Caco-2 (cell line): ENCODE measurements at regions of chr5 and their contacts with region 1.

Region 1: DNA sequence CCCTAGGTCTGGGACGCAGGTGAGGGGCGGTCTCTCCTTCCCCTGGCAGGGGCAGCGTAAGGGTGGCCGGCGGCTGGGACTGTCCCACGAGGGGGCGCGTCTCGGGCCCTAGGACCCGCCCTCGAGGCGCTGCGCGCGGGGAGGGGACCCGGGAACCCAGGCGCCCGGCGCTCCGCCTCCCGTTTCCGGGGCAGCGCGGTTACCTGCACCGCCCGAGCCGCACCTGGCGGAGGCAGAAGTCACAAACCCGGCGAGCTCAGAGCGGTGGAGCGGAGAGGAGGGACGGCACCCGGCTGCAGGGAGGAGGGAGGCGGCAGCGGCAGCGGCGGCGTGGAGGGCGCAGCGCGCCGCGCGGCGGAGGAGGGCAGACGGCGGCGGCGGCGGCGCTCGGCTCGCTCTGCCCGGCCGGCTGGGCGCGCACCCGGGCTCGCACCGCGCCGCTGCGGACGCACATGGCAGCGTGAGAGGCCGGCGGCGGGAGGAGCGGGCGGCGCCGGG is at the start of gene WWC1:
- DNase-seq: peak; percentile 96 to 98
- H3K4me3 ChIP-seq: peak within 1 kb of the TSS; percentile 77
- H3K4me3 Mint-ChIP-seq: peak within 1 kb of the TSS; percentile 96
- H3K27ac Mint-ChIP-seq: peak within 1 kb of the TSS; percentile 95
- H3K4me1 ChIP-seq: peaks cover 72% of the 10 kb centered on the region
- H3K4me1 Mint-ChIP-seq: peaks cover 58% of the 10 kb centered on the region
- H3K27me3 ChIP-seq: no peaks in the 10 kb centered on the region
- H3K27me3 Mint-ChIP-seq: no peaks in the 10 kb centered on the region
- CTCF ChIP-seq: peak; percentile 62 to 69
- total RNA-seq, gene WWC1: 108 and 109 TPM in 2 replicates

Region 2: GRCh38 chr5:167950126-167950721 is 341.3 kb before region 1 on chr5:
- CTCF ChIA-PET with region 1: no interaction called
- POLR2A ChIA-PET with region 1: no interaction called
- intact Hi-C with region 1: no loop called
- DNase-seq: no peak
- H3K4me3 ChIP-seq: no peak overlapping the region
- H3K4me3 Mint-ChIP-seq: no peak overlapping the region
- H3K27ac Mint-ChIP-seq: no peak overlapping the region
- H3K4me1 ChIP-seq: peaks cover 9% of the 10 kb centered on the region
- H3K4me1 Mint-ChIP-seq: no peaks in the 10 kb centered on the region
- H3K27me3 ChIP-seq: no peaks in the 10 kb centered on the region
- H3K27me3 Mint-ChIP-seq: peaks cover 14% of the 10 kb centered on the region
- CTCF ChIP-seq: no peak

Region 3: GRCh38 chr5:168234133-168234532 is 57.4 kb before region 1 on chr5:
- CTCF ChIA-PET with region 1: no interaction called
- POLR2A ChIA-PET with region 1: no interaction called
- intact Hi-C with region 1: no loop called
- DNase-seq: no peak
- H3K4me3 ChIP-seq: no peak overlapping the region
- H3K4me3 Mint-ChIP-seq: no peak overlapping the region
- H3K27ac Mint-ChIP-seq: no peak overlapping the region
- H3K4me1 ChIP-seq: no peaks in the 10 kb centered on the region
- H3K4me1 Mint-ChIP-seq: peaks cover 6% of the 10 kb centered on the region
- H3K27me3 ChIP-seq: no peaks in the 10 kb centered on the region
- H3K27me3 Mint-ChIP-seq: no peaks in the 10 kb centered on the region
- CTCF ChIP-seq: no peak

Region 4: DNA sequence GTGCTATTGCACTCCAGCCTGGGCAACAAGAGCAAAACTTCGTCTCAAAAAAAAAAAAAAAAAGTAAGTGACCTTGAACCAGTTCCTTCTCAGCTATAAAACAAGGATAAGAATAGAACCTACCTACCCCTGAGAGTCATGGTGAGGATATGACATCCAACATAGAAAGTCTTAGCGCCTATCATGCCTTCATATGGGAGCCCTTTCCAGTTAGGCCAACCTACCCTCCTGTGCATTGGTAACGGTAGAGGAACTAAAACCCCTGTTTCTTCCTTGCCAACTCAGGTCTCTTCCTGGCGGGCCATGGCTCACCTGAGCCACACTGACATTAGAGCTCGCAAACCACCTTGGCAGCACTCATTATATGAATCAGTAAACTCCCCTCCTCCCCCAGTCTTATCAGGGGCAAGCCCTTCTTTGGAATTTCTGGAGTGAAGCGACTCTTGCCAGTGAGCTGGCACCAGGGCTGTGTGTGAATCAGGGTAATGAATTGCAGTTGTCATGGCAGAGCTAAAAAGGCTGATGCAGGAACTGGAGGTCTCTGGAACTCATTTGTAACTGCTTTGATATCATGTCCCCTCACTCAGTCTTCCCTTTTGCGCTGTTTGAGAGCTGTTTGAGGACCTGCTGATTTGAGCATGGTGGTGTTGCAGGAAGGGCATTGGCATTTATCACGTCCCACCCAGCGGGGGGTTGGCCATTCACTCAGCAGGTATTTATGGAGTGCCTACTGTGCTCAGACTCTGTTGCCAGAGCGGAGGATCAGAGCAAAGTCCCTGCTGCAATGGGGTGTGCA is 10.3 kb after region 1 on chr5:
- CTCF ChIA-PET with region 1: interaction called, 14 read pairs
- POLR2A ChIA-PET with region 1: interaction called, 4 read pairs
- intact Hi-C with region 1: loop called (anchors 1 kb)
- DNase-seq: no peak
- H3K4me3 ChIP-seq: no peak overlapping the region
- H3K4me3 Mint-ChIP-seq: peak overlapping the region; percentile 25
- H3K27ac Mint-ChIP-seq: peak overlapping the region; percentile 56
- H3K4me1 ChIP-seq: peaks cover 73% of the 10 kb centered on the region
- H3K4me1 Mint-ChIP-seq: peaks cover 59% of the 10 kb centered on the region
- H3K27me3 ChIP-seq: no peaks in the 10 kb centered on the region
- H3K27me3 Mint-ChIP-seq: no peaks in the 10 kb centered on the region
- CTCF ChIP-seq: no peak

Region 5: DNA sequence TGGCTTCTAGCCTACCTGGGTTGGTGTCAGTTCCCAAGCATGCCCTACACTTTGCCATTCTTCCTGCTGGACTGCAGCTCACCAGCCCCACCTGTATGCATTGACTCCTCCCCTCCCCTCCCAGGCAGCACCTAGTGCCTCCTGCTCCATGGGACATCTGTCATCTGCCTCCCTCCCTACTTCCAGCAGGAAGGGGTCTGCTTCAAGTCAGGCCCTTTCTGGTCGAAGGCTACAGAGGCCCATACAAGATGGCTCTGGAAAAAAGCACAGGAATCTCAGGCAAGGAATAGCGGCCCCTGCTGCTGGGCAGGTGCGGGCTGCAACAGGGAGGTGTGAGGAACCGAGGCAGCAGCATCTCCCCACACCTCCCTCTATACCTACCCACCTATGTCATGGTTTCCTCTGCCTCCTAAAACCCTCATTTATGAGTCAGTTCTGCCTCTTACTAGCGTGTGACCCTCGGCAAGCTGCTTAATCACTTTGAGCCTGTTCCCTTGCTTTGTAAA is 19.6 kb after region 1 on chr5:
- CTCF ChIA-PET with region 1: interaction called, 24 read pairs
- POLR2A ChIA-PET with region 1: interaction called, 22 read pairs
- intact Hi-C with region 1: loop called (anchors 1 kb)
- DNase-seq: peak in 1 of 2 experiments; percentile 71
- H3K4me3 ChIP-seq: no peak overlapping the region
- H3K4me3 Mint-ChIP-seq: peak overlapping the region; percentile 42
- H3K27ac Mint-ChIP-seq: peak overlapping the region; percentile 82
- H3K4me1 ChIP-seq: peaks cover 88% of the 10 kb centered on the region
- H3K4me1 Mint-ChIP-seq: peaks cover 59% of the 10 kb centered on the region
- H3K27me3 ChIP-seq: no peaks in the 10 kb centered on the region
- H3K27me3 Mint-ChIP-seq: no peaks in the 10 kb centered on the region
- CTCF ChIP-seq: peak in 1 of 2 experiments; percentile 3

Region 6: DNA sequence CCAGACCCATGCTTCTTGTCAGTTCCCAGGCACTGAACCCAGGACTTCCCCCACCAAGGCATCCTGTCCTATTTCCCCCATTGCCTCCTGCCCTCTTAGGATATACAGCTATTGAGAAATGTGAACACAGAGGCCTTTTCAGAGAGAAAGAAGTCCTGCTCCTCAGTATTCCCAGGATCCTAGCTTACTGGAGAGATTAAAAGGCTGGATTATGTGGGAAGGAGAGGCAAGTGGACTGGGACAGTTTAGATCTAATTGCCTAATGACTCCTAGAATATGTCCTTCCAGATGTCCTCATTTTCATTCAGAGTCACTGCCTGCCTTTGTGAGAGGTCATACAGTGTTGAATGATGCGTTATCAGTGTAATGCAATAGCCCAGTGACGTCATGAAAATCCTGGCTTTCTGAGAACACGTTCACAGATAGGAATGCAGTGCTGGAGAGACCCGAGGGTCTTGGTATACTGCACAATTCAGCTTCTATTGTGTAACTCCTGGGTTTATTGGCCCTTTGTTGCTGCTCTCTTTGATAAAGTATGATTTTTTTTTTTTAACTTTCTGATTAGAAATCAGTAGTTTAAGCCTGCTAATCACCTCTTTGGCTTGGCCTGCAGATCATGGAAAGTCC is 26.1 kb after region 1 on chr5:
- CTCF ChIA-PET with region 1: interaction called, 24 read pairs
- POLR2A ChIA-PET with region 1: interaction called, 22 read pairs
- intact Hi-C with region 1: loop called (anchors 1 kb)
- DNase-seq: peak; percentile 90 to 95
- H3K4me3 ChIP-seq: no peak overlapping the region
- H3K4me3 Mint-ChIP-seq: peak overlapping the region; percentile 35
- H3K27ac Mint-ChIP-seq: peak overlapping the region; percentile 98
- H3K4me1 ChIP-seq: peaks cover 83% of the 10 kb centered on the region
- H3K4me1 Mint-ChIP-seq: peaks cover 48% of the 10 kb centered on the region
- H3K27me3 ChIP-seq: no peaks in the 10 kb centered on the region
- H3K27me3 Mint-ChIP-seq: no peaks in the 10 kb centered on the region
- CTCF ChIP-seq: no peak

Region 7: DNA sequence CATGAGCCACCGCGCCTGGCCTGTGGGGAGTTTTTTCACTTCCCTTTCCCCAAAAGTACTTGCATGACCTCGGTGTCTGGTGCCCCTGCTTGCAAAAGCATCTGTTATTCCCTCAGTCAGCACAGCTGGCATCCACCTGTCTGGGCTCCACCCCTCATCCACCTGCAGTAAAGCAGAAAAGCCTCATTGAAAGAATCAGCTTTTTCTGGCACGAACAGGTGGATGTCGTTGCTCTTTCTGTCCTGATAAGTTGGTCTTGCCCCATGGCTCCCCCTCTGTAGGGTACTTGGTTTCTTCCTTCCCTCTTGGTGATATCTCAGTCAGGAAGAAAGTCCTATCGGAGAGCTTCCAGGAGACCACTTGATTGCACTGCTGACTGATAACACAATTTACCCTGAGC is 37.3 kb after region 1 on chr5:
- CTCF ChIA-PET with region 1: interaction called, 4 read pairs
- POLR2A ChIA-PET with region 1: interaction called, 7 read pairs
- intact Hi-C with region 1: loop called (anchors 1 kb)
- DNase-seq: peak; percentile 95 to 96
- H3K4me3 ChIP-seq: no peak overlapping the region
- H3K4me3 Mint-ChIP-seq: peak overlapping the region; percentile 57
- H3K27ac Mint-ChIP-seq: peak overlapping the region; percentile 88
- H3K4me1 ChIP-seq: peaks cover 83% of the 10 kb centered on the region
- H3K4me1 Mint-ChIP-seq: peaks cover 78% of the 10 kb centered on the region
- H3K27me3 ChIP-seq: no peaks in the 10 kb centered on the region
- H3K27me3 Mint-ChIP-seq: no peaks in the 10 kb centered on the region
- CTCF ChIP-seq: no peak

Region 8: DNA sequence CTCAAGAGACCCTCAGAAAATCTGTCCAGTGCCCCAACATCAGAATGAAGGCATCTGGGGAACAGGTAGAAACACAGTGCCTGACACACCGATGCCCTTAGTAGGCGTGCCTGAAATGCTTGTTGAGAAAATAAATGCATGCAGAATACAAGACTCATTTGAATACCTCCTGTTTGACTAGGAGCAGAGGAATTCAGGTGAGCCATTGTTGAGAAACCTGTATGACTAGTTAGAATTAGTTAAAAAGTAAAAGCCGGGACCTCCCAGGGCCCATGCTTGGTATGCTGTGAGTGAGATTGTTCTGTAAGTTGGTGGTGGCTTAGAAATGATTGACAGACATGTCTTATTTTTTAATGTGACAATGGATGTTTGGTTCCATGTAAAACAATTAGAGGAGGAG is 54.9 kb after region 1 on chr5:
- CTCF ChIA-PET with region 1: interaction called, 7 read pairs
- POLR2A ChIA-PET with region 1: interaction called, 7 read pairs
- intact Hi-C with region 1: loop called (anchors 1 kb)
- DNase-seq: peak; percentile 79 to 80
- H3K4me3 ChIP-seq: no peak overlapping the region
- H3K4me3 Mint-ChIP-seq: peak overlapping the region; percentile 71
- H3K27ac Mint-ChIP-seq: peak overlapping the region; percentile 92
- H3K4me1 ChIP-seq: peaks cover 81% of the 10 kb centered on the region
- H3K4me1 Mint-ChIP-seq: peaks cover 74% of the 10 kb centered on the region
- H3K27me3 ChIP-seq: no peaks in the 10 kb centered on the region
- H3K27me3 Mint-ChIP-seq: no peaks in the 10 kb centered on the region
- CTCF ChIP-seq: no peak

Region 9: DNA sequence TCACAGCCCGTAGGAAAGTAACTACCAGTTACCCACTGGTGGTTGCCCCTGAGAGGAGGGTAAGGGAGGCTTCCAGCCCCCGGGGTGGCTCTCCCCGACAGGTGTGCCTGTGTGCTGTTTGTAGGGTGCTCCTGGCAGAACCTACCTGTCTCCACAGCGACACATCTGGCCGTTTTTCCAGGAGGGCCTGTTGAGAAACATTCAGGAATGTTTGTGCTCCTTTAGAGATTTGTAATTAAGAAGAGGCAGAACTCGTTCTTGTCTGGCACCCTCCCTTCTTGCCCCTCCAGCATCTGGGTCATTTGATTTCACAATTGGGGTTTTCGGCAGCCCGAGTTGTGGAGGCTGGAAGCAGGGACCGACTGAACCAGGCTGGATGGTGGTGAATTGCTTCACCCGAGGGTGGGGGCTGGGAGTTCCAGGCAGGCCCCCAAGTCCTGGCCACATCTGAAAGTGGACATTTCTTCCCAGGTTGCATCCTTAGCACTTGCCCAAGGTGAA is 74.1 kb after region 1 on chr5:
- CTCF ChIA-PET with region 1: interaction called, 12 read pairs
- POLR2A ChIA-PET with region 1: interaction called, 10 read pairs
- intact Hi-C with region 1: loop called (anchors 1 kb)
- DNase-seq: peak; percentile 86 to 90
- H3K4me3 ChIP-seq: no peak overlapping the region
- H3K4me3 Mint-ChIP-seq: peak overlapping the region; percentile 63
- H3K27ac Mint-ChIP-seq: peak overlapping the region; percentile 97
- H3K4me1 ChIP-seq: peaks cover 61% of the 10 kb centered on the region
- H3K4me1 Mint-ChIP-seq: peaks cover 55% of the 10 kb centered on the region
- H3K27me3 ChIP-seq: no peaks in the 10 kb centered on the region
- H3K27me3 Mint-ChIP-seq: no peaks in the 10 kb centered on the region
- CTCF ChIP-seq: peak; percentile 46 to 84